ENCODE measurements at regions of chr14 and their contacts with region 1.

Region 1: GRCh38 chr14:51283402-51284085 is 43.5 kb downstream of the TMX1 start:
- DNase-seq: peak; percentile 68
- H3K4me3 ChIP-seq: no peak overlapping the region
- H3K27ac ChIP-seq: peak overlapping the region; percentile 64 to 80
- H3K4me1 ChIP-seq: peaks cover 4% of the 10 kb centered on the region in 2 experiments; a peak in 3 of 4 replicates
- H3K27me3 ChIP-seq: no peaks in the 10 kb centered on the region
- CTCF ChIP-seq: peak; percentile 96
- EP300 ChIP-seq: no peak
- RAD21 ChIP-seq: peak; percentile 99

Region 2: DNA sequence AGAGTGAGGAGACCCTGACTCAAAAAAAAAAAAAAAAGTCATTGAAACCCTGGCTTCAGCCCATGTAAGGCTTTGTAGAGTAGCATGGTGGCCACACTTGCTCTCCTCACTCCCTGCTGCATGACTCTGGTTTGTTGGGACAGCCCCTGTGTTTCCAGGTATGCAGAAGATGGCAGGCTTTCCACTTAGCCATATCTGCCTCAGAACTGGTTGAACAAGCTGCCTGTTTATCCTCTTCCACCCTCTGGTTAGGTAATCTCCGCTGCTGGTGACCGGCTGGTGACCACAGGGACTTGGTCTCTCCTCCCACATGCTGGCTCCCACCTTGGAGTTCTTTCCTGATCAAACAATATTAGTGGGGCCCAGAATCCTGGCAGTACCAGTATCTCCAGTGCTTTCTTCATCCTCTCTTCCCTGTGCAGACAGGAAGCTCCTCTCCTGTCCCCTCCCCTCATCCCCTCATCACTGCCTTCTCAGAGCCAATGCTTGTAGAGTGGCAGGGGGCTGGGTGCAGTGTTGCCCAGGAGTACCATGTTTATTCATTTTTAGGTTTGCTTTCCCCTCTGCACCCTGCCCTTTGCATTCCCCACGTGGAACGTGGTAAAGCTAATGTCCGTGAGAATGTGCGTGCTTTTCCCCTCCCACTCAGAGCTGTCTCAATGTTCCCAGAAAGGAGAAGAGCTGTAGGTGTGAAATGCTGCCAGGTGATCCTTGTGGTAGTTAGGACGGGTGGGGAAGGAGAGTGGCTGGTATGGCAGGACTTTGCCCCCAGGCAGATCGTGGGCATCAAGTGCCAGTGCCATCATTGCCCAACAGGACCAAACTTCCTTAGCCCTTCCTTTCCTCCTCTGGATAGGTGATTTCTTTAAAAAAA is 400.4 kb before region 1 on chr14:
- CTCF ChIA-PET with region 1: no interaction called
- POLR2A ChIA-PET with region 1: no interaction called
- DNase-seq: no peak
- H3K4me3 ChIP-seq: no peak overlapping the region
- H3K27ac ChIP-seq: no peak overlapping the region
- H3K4me1 ChIP-seq: peaks cover 0 to 2% of the 10 kb centered on the region in 2 experiments; a peak in 2 of 4 replicates
- H3K27me3 ChIP-seq: no peaks in the 10 kb centered on the region
- CTCF ChIP-seq: no peak
- EP300 ChIP-seq: no peak
- RAD21 ChIP-seq: no peak

Region 3: DNA sequence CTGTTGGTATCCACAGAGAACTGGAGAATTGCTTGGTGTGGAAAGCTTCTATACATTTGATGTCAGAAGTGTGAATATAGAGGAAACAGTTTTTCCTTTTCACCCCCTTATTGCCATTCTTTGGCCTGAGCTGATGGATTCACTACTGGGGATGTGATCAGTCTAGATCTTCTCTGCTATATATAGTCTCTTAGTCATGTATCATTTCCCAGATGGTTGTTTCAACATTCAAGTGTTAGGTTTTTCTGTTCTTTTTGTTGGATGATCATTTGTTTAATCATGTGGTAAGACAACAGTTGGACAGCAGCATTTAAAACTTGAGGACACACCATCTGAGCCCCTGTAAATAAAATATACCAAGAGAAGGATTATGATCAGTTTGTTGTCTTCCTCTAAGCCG is 13.9 kb before region 1 on chr14:
- CTCF ChIA-PET with region 1: interaction called, 14 read pairs
- POLR2A ChIA-PET with region 1: no interaction called
- DNase-seq: no peak
- H3K4me3 ChIP-seq: no peak overlapping the region
- H3K27ac ChIP-seq: no peak overlapping the region
- H3K4me1 ChIP-seq: no peaks in the 10 kb centered on the region
- H3K27me3 ChIP-seq: no peaks in the 10 kb centered on the region
- CTCF ChIP-seq: no peak
- EP300 ChIP-seq: no peak
- RAD21 ChIP-seq: no peak

Region 4: GRCh38 chr14:51507906-51508511 is 224.5 kb after region 1 on chr14:
- CTCF ChIA-PET with region 1: interaction called, 12 read pairs
- POLR2A ChIA-PET with region 1: no interaction called
- DNase-seq: peak; percentile 68
- H3K4me3 ChIP-seq: no peak overlapping the region
- H3K27ac ChIP-seq: peak overlapping the region; percentile 93 to 95
- H3K4me1 ChIP-seq: peaks cover 21 to 32% of the 10 kb centered on the region in 2 experiments
- H3K27me3 ChIP-seq: no peaks in the 10 kb centered on the region
- CTCF ChIP-seq: 0 out of 2 replicates have a peak, but pooled peaks have one; percentile 10
- EP300 ChIP-seq: peak; percentile 61 to 90; a peak in 3 of 4 replicates
- RAD21 ChIP-seq: peak; percentile 21; the same call in 1 of the 2 replicates

Region 5: DNA sequence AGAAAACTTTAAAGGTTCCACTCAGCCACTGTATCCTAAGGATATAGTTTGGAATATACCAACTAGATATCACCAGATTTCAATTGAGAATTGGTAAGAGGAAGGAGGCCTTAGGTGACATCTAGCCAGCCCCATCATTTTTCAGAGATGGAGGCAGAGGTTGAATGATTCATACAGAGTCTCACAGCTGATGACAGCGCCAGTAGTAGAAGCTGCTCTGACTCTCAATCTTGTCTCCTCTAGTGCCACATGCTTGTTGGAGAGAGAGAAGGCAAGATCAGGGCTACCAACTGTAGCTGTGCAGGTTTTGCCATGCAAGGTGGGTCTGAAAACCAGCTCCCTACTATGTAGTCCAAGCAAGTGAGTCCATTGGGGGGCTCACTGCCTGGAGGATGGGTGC is 374.2 kb after region 1 on chr14:
- CTCF ChIA-PET with region 1: interaction called, 43 read pairs
- POLR2A ChIA-PET with region 1: interaction called, 6 read pairs
- DNase-seq: no peak
- H3K4me3 ChIP-seq: peak overlapping the region in 1 of 2 experiments; percentile 24; a peak in 1 of 4 replicates
- H3K27ac ChIP-seq: peak overlapping the region; percentile 27 to 76; a peak in 3 of 4 replicates
- H3K4me1 ChIP-seq: peaks cover 27 to 34% of the 10 kb centered on the region in 2 experiments
- H3K27me3 ChIP-seq: no peaks in the 10 kb centered on the region
- CTCF ChIP-seq: no peak
- EP300 ChIP-seq: no peak
- RAD21 ChIP-seq: no peak

Region 6: DNA sequence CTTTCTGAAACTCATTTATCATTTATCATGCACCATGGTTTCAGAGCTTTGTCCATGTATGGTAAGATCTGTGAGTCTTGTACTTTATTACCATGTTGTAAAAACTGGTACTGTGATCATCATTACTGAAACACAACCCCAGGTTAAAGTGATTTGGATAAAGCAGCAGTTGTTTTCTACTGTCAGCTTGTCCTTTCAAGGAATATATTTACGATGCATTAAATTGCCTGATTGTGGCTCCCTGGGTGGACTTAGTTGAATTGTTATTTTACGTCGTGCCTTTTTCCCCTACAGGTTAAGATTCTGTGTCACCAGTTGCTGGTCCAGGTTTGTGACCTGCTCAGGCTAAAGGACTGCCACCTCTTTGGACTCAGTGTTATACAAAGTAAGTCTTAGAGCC is 414.3 kb after region 1 on chr14:
- CTCF ChIA-PET with region 1: interaction called, 10 read pairs
- POLR2A ChIA-PET with region 1: no interaction called
- DNase-seq: no peak
- H3K4me3 ChIP-seq: no peak overlapping the region
- H3K27ac ChIP-seq: peak overlapping the region in 1 of 2 experiments; percentile 14; a peak in 1 of 4 replicates
- H3K4me1 ChIP-seq: peaks cover 3 to 18% of the 10 kb centered on the region in 2 experiments
- H3K27me3 ChIP-seq: no peaks in the 10 kb centered on the region
- CTCF ChIP-seq: no peak
- EP300 ChIP-seq: no peak
- RAD21 ChIP-seq: no peak

Region 7: DNA sequence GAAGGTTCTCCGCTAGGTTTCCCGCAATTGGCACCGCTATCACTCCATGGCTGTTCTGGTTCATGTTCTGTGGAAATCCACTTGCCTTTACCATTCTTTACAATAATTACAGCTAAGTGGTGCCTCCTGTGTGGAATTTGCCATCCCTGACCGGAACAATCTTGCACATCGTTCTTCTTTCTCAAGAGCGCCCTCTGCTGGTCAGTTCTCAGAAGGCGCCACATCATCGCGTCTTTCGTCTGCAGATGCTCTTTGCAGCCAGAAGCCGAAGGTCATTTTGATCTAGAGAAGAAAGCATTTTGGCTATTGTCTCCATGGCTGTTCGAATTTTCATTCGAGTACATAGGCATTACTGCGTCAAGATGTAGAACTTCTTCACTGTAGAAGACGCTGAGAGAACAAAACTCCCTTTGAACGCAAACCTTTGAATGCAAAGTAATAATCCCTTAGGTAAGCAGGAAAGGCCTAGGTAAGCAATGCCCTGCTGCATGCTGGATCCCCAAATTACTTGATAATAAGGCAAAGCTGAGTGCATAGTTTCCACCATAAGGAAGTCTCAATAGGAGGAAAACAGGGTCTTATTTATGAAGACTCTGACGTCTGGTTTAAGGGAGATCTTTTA is 695.7 kb after region 1 on chr14:
- CTCF ChIA-PET with region 1: interaction called, 35 read pairs
- POLR2A ChIA-PET with region 1: no interaction called
- DNase-seq: peak; percentile 63
- H3K4me3 ChIP-seq: no peak overlapping the region; a peak in 1 of 4 replicates
- H3K27ac ChIP-seq: peak overlapping the region in 1 of 2 experiments; percentile 55; a peak in 1 of 4 replicates
- H3K4me1 ChIP-seq: peaks cover 0 to 2% of the 10 kb centered on the region in 2 experiments; a peak in 2 of 4 replicates
- H3K27me3 ChIP-seq: no peaks in the 10 kb centered on the region
- CTCF ChIP-seq: peak; percentile 91
- EP300 ChIP-seq: no peak
- RAD21 ChIP-seq: peak; percentile 93

Measured in SK-N-SH (cell line).